ENCODE measurements at regions of chr2 and their contacts with region 1.

Region 1: DNA sequence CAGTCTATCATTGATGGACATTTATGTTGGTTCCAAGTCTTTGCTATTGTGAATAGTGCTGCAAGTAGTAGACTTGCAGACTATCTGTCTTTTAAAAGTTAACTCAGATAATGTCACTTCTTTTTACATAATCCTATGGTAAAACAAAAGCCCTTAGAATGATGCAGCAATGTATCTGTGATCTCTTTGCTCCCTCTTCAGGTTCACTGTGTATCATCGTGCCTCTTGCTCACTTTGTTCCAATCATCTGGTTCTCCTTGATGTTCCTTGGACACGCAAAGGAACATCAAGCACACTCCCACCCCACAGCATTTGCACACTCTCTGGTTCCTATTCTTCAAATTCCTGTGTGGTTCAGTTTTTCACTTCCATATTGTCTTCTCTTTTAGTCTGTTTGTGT is 472.5 kb upstream of the ZNF804A start:
- DNase-seq: no peak
- ATAC-seq: no peak
- H3K4me3 Mint-ChIP-seq: no peak overlapping the region
- H3K27ac Mint-ChIP-seq: no peak overlapping the region
- H3K4me1 Mint-ChIP-seq: no peaks in the 10 kb centered on the region
- H3K27me3 Mint-ChIP-seq: no peaks in the 10 kb centered on the region
- CTCF ChIP-seq: no peak

Region 2: DNA sequence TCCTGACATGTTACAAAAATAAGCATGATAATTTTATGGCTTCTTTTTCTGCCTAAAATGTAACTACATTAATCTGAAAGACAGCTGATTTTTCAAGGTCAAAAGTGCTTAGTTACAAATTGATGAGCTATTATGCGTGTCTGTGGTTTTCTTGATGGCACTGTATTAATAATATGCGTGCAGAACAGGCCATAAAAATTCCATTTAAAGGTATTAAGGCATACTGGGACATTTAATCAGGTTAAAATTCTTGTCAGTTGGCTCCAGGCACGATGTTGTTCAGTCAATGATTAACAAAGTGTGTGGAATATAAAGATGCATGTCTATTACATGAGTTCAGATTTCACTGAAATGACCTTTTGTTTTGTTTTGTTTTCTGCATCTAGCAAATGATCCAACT is 52.4 kb after region 1 on chr2:
- CTCF ChIA-PET with region 1: no interaction called
- POLR2A ChIA-PET with region 1: no interaction called
- intact Hi-C with region 1: loop called (anchors 1 kb)
- DNase-seq: no peak
- ATAC-seq: no peak
- H3K4me3 Mint-ChIP-seq: no peak overlapping the region
- H3K27ac Mint-ChIP-seq: no peak overlapping the region
- H3K4me1 Mint-ChIP-seq: no peaks in the 10 kb centered on the region
- H3K27me3 Mint-ChIP-seq: no peaks in the 10 kb centered on the region
- CTCF ChIP-seq: no peak

Measured in activated B cell treated with CpG ODN at 0.5 μM for 24 hours (primary cell).